PC-3 (cell line): ENCODE measurements at regions of chr5 and their contacts with region 1.

Region 1: GRCh38 chr5:154179846-154180710 is 10.5 kb upstream of the GALNT10 start:
- DNase-seq: peak; percentile 71
- ATAC-seq: peak; percentile 64
- H3K4me3 ChIP-seq: no peak overlapping the region
- H3K27ac ChIP-seq: no peak overlapping the region
- H3K4me1 ChIP-seq: peaks cover 22% of the 10 kb centered on the region
- H3K27me3 ChIP-seq: no peaks in the 10 kb centered on the region
- CTCF ChIP-seq: peak; percentile 78

Region 2: GRCh38 chr5:153974131-153974812 is 205.8 kb before region 1 on chr5:
- CTCF ChIA-PET with region 1: no interaction called
- POLR2A ChIA-PET with region 1: no interaction called
- intact Hi-C with region 1: loop called (anchors 1 kb)
- DNase-seq: peak; percentile 69
- ATAC-seq: peak; percentile 59
- H3K4me3 ChIP-seq: no peak overlapping the region
- H3K27ac ChIP-seq: no peak overlapping the region
- H3K4me1 ChIP-seq: no peaks in the 10 kb centered on the region
- H3K27me3 ChIP-seq: peaks cover 16% of the 10 kb centered on the region
- CTCF ChIP-seq: peak; percentile 78

Region 3: GRCh38 chr5:154072414-154073171 is 107.5 kb before region 1 on chr5:
- CTCF ChIA-PET with region 1: interaction called, 10 read pairs
- POLR2A ChIA-PET with region 1: no interaction called
- intact Hi-C with region 1: loop called (anchors 1 kb)
- DNase-seq: peak; percentile 80
- ATAC-seq: peak; percentile 97
- H3K4me3 ChIP-seq: peak overlapping the region; percentile 56
- H3K27ac ChIP-seq: no peak overlapping the region
- H3K4me1 ChIP-seq: peaks cover 3% of the 10 kb centered on the region
- H3K27me3 ChIP-seq: no peaks in the 10 kb centered on the region
- CTCF ChIP-seq: peak; percentile 90

Region 4: GRCh38 chr5:154129921-154130320 is 50.2 kb before region 1 on chr5:
- CTCF ChIA-PET with region 1: no interaction called
- POLR2A ChIA-PET with region 1: no interaction called
- intact Hi-C with region 1: loop called (anchors 5 kb)
- DNase-seq: no peak
- ATAC-seq: no peak
- H3K4me3 ChIP-seq: no peak overlapping the region
- H3K27ac ChIP-seq: no peak overlapping the region
- H3K4me1 ChIP-seq: peaks cover 10% of the 10 kb centered on the region
- H3K27me3 ChIP-seq: no peaks in the 10 kb centered on the region
- CTCF ChIP-seq: no peak